HAP-1 (cell line): ENCODE measurements at regions of chrX and their contacts with region 1.

Region 1: GRCh38 chrX:134764212-134764785 is 106.0 kb upstream of the PLAC1 start:
- DNase-seq: peak; percentile 27 to 87
- H3K4me3 ChIP-seq: no peak overlapping the region
- H3K4me1 ChIP-seq: peaks cover 8% of the 10 kb centered on the region
- H3K27me3 ChIP-seq: no peaks in the 10 kb centered on the region

Region 2: GRCh38 chrX:134484039-134484438 is 280.3 kb before region 1 on chrX:
- in situ Hi-C with region 1: loop called (anchors 10 kb)
- DNase-seq: peak in 1 of 2 experiments; percentile 62
- H3K4me3 ChIP-seq: no peak overlapping the region
- H3K4me1 ChIP-seq: peaks cover 9% of the 10 kb centered on the region
- H3K27me3 ChIP-seq: no peaks in the 10 kb centered on the region

Region 3: DNA sequence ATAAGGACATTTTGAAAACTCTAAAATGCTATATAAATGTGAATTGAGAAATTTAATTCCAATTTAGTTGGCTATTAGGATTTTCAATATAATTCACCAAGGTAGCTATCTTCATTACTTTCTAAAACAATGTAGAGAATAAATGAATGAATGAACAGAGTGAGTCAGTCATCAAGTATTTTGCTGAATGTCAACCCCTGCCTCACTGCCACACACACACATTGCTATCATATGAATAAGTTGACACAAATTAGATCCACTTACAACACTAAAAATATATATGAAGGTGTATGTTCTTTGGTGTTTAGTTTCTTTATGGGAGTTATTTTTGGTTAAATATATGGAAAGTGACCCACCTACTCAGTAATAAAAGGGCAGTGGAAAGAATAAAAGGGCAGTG is 85.1 kb after region 1 on chrX:
- in situ Hi-C with region 1: no loop called
- DNase-seq: no peak
- H3K4me3 ChIP-seq: no peak overlapping the region
- H3K4me1 ChIP-seq: peaks cover 15% of the 10 kb centered on the region
- H3K27me3 ChIP-seq: no peaks in the 10 kb centered on the region

Region 4: GRCh38 chrX:134891652-134892051 is 127.4 kb after region 1 on chrX:
- in situ Hi-C with region 1: no loop called
- DNase-seq: no peak
- H3K4me3 ChIP-seq: no peak overlapping the region
- H3K4me1 ChIP-seq: peaks cover 2% of the 10 kb centered on the region; the same call in 1 of the 2 replicates
- H3K27me3 ChIP-seq: no peaks in the 10 kb centered on the region